ENCODE measurements at regions of chr1 and their contacts with region 1.

Region 1: DNA sequence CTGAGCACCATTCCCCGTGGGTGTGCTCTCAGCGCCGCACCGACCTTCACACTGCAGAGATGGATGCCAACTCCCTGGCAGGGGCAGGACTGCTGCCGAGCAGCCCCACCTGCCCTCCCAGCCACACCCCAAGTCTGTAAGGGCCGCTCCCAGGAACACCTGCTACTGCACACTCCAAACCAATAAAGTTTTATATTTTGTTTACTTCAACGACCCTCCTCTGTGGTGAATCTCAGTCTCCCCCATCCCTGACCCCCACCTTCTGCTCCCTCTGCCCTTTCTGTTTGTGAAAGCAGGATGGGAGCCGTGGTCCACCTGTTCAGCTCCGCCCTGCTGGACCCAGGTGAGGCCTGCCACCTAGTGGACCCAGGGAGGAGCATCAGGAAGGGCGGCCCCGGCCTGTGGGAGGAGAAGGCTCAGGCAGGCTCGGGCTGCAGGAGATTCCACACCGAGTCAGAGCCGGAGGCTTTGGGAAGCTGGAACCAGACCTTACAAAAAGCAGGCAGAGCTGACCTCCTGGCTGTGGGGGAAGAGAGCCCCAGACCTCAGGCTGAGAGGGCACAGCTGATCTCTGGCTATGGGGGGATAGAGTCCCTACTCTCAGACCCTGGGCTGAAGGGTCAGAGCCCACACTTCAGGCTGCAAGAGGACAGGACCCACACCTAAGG is 982 bp upstream of the TMEM82 start:
- DNase-seq: peak; percentile 88
- ATAC-seq: peak; percentile 96
- H3K4me3 Mint-ChIP-seq: no peak overlapping the region
- H3K27ac Mint-ChIP-seq: no peak overlapping the region
- H3K4me1 Mint-ChIP-seq: peaks cover 5% of the 10 kb centered on the region
- H3K27me3 Mint-ChIP-seq: no peaks in the 10 kb centered on the region

Region 2: GRCh38 chr1:15649937-15650336 is 91.4 kb before region 1 on chr1:
- CTCF ChIA-PET with region 1: interaction called, 4 read pairs
- POLR2A ChIA-PET with region 1: no interaction called
- intact Hi-C with region 1: loop called in 1 of 2 experiments (anchors 5 kb)
- DNase-seq: no peak
- ATAC-seq: no peak
- H3K4me3 Mint-ChIP-seq: no peak overlapping the region
- H3K27ac Mint-ChIP-seq: no peak overlapping the region
- H3K4me1 Mint-ChIP-seq: no peaks in the 10 kb centered on the region
- H3K27me3 Mint-ChIP-seq: no peaks in the 10 kb centered on the region